ENCODE measurements at regions of chr6 and their contacts with region 1.

Region 1: DNA sequence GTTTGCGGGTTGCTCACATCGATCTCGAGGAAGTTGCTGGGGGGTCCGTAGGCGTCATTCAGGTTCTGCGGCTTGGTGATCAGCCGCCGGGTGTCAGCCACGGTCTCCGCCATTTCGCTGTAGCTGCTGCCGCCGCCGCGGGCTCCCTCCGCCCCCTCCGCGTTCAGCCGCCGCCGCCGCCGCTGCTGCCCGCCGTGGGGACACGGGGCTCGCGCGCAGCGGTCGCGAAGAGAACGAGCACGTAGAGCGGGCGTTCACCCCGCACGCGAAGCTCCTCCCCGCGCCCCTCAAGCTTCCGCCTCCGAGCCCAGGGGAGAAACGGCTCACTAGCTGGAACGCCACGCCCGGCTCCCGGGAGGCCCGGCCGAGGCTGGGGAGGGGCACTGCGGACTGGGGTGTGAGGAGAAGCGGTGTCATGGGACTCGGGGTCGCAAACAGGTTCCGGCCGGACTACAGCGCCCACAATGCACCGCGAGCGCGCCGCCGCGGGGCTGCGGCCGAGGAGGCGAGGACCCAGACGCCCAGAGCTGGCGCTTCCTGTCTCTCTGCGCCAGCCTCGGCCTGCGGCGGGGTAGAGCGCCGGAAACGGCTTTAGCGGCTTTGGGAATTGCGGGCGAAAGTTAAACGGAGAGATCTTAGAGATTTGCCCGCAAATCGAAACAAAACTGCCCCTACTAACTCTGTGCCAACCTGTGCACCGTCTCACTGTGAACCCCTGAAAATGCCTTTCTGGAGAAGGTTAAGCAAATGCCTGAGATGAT is at the start of gene SNX3:
- DNase-seq: peak; percentile 81 to 92 (median 91)
- ATAC-seq: peak; percentile 92
- H3K4me3 ChIP-seq: peak within 1 kb of the TSS; percentile 76
- H3K4me3 Mint-ChIP-seq: peak within 1 kb of the TSS; percentile 78 to 97 (median 91)
- H3K27ac ChIP-seq: peak within 1 kb of the TSS; percentile 96
- H3K27ac Mint-ChIP-seq: peak within 1 kb of the TSS; percentile 85 to 98 (median 96)
- H3K4me1 ChIP-seq: peaks cover 0 to 8% of the 10 kb centered on the region in 2 donors
- H3K4me1 Mint-ChIP-seq: peaks cover 16 to 40% (median 26%) of the 10 kb centered on the region in 7 donors
- H3K27me3 ChIP-seq: no peaks in the 10 kb centered on the region
- H3K27me3 Mint-ChIP-seq: peaks cover 0 to 14% (median 0%) of the 10 kb centered on the region in 5 donors
- total RNA-seq, gene SNX3: 42.5 to 87.4 (median 65.8) TPM

Region 2: DNA sequence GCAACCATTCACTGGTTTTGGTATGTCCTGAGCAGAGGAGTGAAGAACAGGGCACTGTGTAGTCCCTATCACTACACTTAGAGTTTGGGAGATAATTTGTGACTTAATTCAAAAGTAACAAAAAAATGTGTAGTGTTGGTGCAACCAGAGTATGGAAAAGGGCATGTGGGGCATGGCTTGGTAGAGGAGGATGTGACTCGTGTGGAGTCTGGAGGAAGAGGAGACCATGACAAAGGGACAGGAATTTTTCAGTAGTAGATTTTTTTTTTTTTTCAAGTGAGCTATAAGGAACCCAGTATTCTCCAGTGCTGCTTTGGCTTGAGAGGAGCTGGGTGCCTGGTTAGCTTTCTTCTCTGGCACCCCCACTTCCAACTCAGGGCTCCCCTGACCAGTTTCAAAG is 1227.9 kb before region 1 on chr6:
- CTCF ChIA-PET with region 1: no interaction called
- POLR2A ChIA-PET with region 1: no interaction called
- intact Hi-C with region 1: loop called in 1 of 2 experiments (anchors 1 kb)
- DNase-seq: no peak
- ATAC-seq: no peak
- H3K4me3 ChIP-seq: no peak overlapping the region
- H3K4me3 Mint-ChIP-seq: no peak overlapping the region
- H3K27ac ChIP-seq: no peak overlapping the region
- H3K27ac Mint-ChIP-seq: peak overlapping the region in 1 of 9 donors; percentile 24
- H3K4me1 ChIP-seq: peaks cover 3 to 17% of the 10 kb centered on the region in 2 donors
- H3K4me1 Mint-ChIP-seq: peaks cover 22 to 56% (median 46%) of the 10 kb centered on the region in 7 donors
- H3K27me3 ChIP-seq: no peaks in the 10 kb centered on the region
- H3K27me3 Mint-ChIP-seq: no peaks in the 10 kb centered on the region

Region 3: GRCh38 chr6:107459283-107460082 is 801.5 kb before region 1 on chr6 and contains the start of gene PDSS2:
- CTCF ChIA-PET with region 1: no interaction called
- POLR2A ChIA-PET with region 1: no interaction called
- intact Hi-C with region 1: loop called in 1 of 2 experiments (anchors 1 kb)
- DNase-seq: peak; percentile 83 to 98 (median 95)
- ATAC-seq: peak; percentile 100
- H3K4me3 ChIP-seq: peak within 1 kb of the TSS; percentile 95
- H3K4me3 Mint-ChIP-seq: peak within 1 kb of the TSS; percentile 87 to 99 (median 96)
- H3K27ac ChIP-seq: peak within 1 kb of the TSS; percentile 75
- H3K27ac Mint-ChIP-seq: peak within 1 kb of the TSS; percentile 92 to 99 (median 96)
- H3K4me1 ChIP-seq: peaks cover 5% of the 10 kb centered on the region in 2 donors
- H3K4me1 Mint-ChIP-seq: peaks cover 10 to 41% (median 36%) of the 10 kb centered on the region in 7 donors
- H3K27me3 ChIP-seq: no peaks in the 10 kb centered on the region
- H3K27me3 Mint-ChIP-seq: peaks cover 0 to 7% (median 0%) of the 10 kb centered on the region in 5 donors
- total RNA-seq, gene PDSS2: 12.0 to 15.3 (median 12.1) TPM

Region 4: DNA sequence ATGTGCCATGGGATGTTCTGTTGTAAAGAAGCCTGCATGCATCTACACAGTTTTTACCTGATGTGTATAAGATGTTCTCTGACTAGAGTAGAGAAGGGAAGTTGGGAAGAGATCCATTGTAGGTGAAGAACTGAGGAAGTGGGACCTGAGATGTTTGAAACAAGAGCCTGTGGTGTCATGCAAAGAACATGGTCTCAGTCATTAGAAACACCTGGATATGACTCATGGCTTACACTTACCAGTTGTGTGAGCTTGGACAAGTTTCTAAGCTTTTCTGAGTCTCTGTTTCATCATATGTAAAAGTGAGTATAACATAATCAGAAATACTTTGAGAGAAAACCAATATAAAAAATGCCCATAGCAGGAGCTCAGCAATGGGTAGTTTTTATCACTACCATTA is 251.1 kb before region 1 on chr6:
- CTCF ChIA-PET with region 1: no interaction called
- POLR2A ChIA-PET with region 1: no interaction called
- intact Hi-C with region 1: no loop called
- DNase-seq: no peak
- ATAC-seq: no peak
- H3K4me3 ChIP-seq: no peak overlapping the region
- H3K4me3 Mint-ChIP-seq: no peak overlapping the region
- H3K27ac ChIP-seq: no peak overlapping the region
- H3K27ac Mint-ChIP-seq: no peak overlapping the region
- H3K4me1 ChIP-seq: no peaks in the 10 kb centered on the region
- H3K4me1 Mint-ChIP-seq: no peaks in the 10 kb centered on the region
- H3K27me3 ChIP-seq: no peaks in the 10 kb centered on the region
- H3K27me3 Mint-ChIP-seq: peaks cover 0 to 5% (median 0%) of the 10 kb centered on the region in 5 donors

Region 5: DNA sequence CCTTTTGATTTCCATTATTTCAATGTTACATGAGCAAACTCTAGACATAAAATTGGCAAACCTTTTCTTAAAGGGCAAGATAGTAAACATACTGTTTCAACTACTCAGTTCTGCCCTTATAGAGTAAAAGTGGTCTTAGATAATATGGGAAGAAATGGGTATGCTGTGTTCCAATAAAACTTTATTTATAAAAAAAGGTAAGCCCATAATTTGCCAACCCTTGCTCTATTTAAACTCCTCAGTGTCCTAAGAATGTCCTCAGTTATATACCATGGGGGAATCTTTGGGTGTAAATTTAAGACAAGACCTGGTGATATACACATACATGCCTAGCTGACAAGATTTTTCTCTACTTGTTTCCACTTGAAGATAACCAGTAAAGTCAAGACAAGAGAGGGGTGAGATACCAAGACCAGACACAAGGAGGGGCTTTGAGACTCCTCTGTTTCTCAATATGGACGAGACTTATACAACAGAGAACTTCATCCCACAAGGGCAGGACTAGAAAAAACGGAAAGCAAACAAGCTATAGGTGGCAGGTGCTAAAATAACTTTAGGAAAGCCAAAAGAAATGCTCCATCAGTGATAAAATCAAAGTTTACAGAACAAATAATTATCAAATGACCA is 10.6 kb before region 1 on chr6:
- CTCF ChIA-PET with region 1: no interaction called
- POLR2A ChIA-PET with region 1: interaction called, 11 read pairs
- intact Hi-C with region 1: no loop called
- DNase-seq: no peak
- ATAC-seq: no peak
- H3K4me3 ChIP-seq: no peak overlapping the region
- H3K4me3 Mint-ChIP-seq: peak overlapping the region in 4 of 10 donors; percentile 17 to 51 (median 30)
- H3K27ac ChIP-seq: no peak overlapping the region
- H3K27ac Mint-ChIP-seq: peak overlapping the region in 2 of 9 donors; percentile 31 to 65
- H3K4me1 ChIP-seq: peaks cover 0 to 4% of the 10 kb centered on the region in 2 donors
- H3K4me1 Mint-ChIP-seq: peaks cover 36 to 75% (median 68%) of the 10 kb centered on the region in 7 donors
- H3K27me3 ChIP-seq: no peaks in the 10 kb centered on the region
- H3K27me3 Mint-ChIP-seq: no peaks in the 10 kb centered on the region

Region 6: GRCh38 chr6:108348655-108349349 is 87.8 kb after region 1 on chr6:
- CTCF ChIA-PET with region 1: no interaction called
- POLR2A ChIA-PET with region 1: no interaction called
- intact Hi-C with region 1: loop called in 1 of 2 experiments (anchors 1 kb)
- DNase-seq: peak in 1 of 9 donors; percentile 2
- ATAC-seq: peak; percentile 22
- H3K4me3 ChIP-seq: no peak overlapping the region
- H3K4me3 Mint-ChIP-seq: peak overlapping the region in 1 of 10 donors; percentile 70
- H3K27ac ChIP-seq: no peak overlapping the region
- H3K27ac Mint-ChIP-seq: peak overlapping the region in 5 of 9 donors; percentile 10 to 89 (median 24)
- H3K4me1 ChIP-seq: no peaks in the 10 kb centered on the region
- H3K4me1 Mint-ChIP-seq: peaks cover 5 to 19% (median 8%) of the 10 kb centered on the region in 7 donors
- H3K27me3 ChIP-seq: no peaks in the 10 kb centered on the region
- H3K27me3 Mint-ChIP-seq: no peaks in the 10 kb centered on the region

Region 7: DNA sequence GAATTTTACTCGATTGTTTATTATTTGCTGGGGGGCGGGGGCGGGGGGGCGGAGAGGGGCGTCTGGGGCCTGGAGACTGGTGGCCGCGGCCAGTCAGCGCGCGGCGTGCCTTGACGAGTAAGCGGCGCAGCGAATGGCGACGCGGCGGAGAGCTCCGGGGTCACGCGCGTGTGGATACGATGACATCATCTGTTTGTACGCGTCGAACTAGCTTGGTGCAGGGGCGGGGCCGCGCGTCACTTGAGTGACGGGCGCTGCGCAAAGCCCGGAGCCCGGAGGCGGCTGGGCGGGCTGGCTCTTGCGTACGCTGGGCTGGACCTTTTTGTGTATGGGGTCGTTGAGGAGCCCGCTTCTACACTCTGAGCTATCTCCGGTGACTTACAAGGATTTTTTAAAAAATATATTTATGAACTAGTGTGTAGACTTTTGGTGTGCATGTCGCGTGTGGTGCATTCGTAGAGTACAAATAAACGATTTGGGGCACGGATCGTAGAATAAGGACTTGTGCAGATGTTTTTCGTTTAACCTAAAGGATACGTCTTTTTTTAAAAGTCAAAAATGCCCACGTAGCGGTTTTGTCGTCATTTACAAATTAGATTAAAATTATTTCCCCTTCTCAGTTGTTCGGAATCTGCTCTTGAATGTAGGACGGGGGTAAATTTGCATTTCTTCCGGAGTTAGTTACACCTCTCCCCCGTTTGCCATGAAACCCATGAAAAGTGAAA is 297.5 kb after region 1 on chr6:
- CTCF ChIA-PET with region 1: no interaction called
- POLR2A ChIA-PET with region 1: interaction called, 16 read pairs
- intact Hi-C with region 1: loop called (anchors 1 kb)
- DNase-seq: peak; percentile 91 to 98 (median 97)
- ATAC-seq: peak; percentile 75
- H3K4me3 ChIP-seq: peak overlapping the region; percentile 75
- H3K4me3 Mint-ChIP-seq: peak overlapping the region; percentile 88 to 98 (median 97)
- H3K27ac ChIP-seq: peak overlapping the region; percentile 100
- H3K27ac Mint-ChIP-seq: peak overlapping the region; percentile 87 to 99 (median 97)
- H3K4me1 ChIP-seq: peaks cover 12 to 13% of the 10 kb centered on the region in 2 donors
- H3K4me1 Mint-ChIP-seq: peaks cover 16 to 28% (median 20%) of the 10 kb centered on the region in 7 donors
- H3K27me3 ChIP-seq: no peaks in the 10 kb centered on the region
- H3K27me3 Mint-ChIP-seq: peaks cover 0 to 55% (median 6%) of the 10 kb centered on the region in 5 donors

Region 8: GRCh38 chr6:109440331-109441068 is 1179.5 kb after region 1 on chr6 and contains the starts of genes PPIL6 and SMPD2:
- CTCF ChIA-PET with region 1: no interaction called
- POLR2A ChIA-PET with region 1: no interaction called
- intact Hi-C with region 1: loop called in 1 of 2 experiments (anchors 1 kb)
- DNase-seq: peak; percentile 63 to 85 (median 77)
- ATAC-seq: peak; percentile 91
- H3K4me3 ChIP-seq: peak within 1 kb of the TSS; percentile 65
- H3K4me3 Mint-ChIP-seq: peak within 1 kb of the TSS; percentile 90 to 95 (median 94)
- H3K27ac ChIP-seq: peak within 1 kb of the TSS; percentile 98
- H3K27ac Mint-ChIP-seq: peak within 1 kb of the TSS; percentile 87 to 97 (median 93)
- H3K4me1 ChIP-seq: peaks cover 11% of the 10 kb centered on the region in 2 donors
- H3K4me1 Mint-ChIP-seq: peaks cover 10 to 32% (median 21%) of the 10 kb centered on the region in 7 donors
- H3K27me3 ChIP-seq: no peaks in the 10 kb centered on the region
- H3K27me3 Mint-ChIP-seq: peaks cover 0 to 2% (median 0%) of the 10 kb centered on the region in 5 donors
- total RNA-seq, gene PPIL6: 0.13 to 1.9 (median 0.40) TPM in 4 of 5 experiments, not detected in the other
- total RNA-seq, gene SMPD2: 16.9 to 33.7 (median 19.6) TPM

Measured in naive thymus-derived CD4-positive, alpha-beta T cell (primary cell).